ENCODE measurements at regions of chr19 and their contacts with region 1.

Region 1: GRCh38 chr19:49097455-49098288 is 12.4 kb downstream of the SNRNP70 start:
- DNase-seq: peak; percentile 61
- ATAC-seq: peak; percentile 96
- H3K4me3 Mint-ChIP-seq: no peak overlapping the region
- H3K27ac Mint-ChIP-seq: no peak overlapping the region
- H3K4me1 Mint-ChIP-seq: peaks cover 7% of the 10 kb centered on the region
- H3K27me3 Mint-ChIP-seq: no peaks in the 10 kb centered on the region
- CTCF ChIP-seq: peak; percentile 71

Region 2: DNA sequence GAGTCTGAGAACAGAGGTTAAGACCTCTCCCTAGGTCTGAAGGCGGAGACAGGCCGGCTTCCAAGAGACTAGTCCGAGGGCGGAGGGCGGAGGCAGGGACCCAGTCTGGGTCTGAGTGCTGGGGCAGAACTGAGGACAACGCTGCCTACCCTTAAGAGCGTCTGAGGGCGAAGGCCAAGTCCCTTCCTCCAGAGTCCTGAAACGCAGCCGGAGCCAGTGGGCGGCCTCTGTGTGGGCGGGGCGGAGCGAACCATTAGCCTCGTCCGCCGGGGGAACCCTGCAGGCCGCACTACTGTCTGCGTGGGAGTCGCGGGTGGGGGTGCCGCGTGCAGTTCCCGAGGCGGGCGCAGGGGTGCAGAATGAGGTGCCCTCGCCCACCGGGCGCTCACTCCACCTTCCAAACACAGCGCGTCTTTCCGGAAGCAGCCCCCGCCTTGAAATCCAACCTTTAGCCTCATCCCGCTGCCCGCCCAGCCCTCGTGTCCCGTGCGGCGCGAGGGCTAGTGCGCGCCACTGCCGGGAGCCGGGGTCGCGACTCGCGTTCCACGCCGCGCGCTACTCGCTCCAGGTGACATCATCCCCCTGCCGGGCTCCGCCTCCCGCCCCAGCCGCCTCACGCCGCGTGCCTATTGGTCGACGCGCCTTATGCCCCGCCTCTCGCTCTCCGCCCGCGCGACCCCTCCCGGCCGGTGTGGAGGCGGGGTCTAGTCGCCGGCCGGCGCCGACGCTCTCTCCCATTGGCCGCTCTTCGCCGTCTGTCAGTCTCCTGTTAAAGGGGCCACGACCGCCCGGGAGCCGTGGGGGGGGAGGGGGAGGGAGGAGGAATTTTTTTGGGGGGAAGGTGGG is 21.1 kb after region 1 on chr19 and contains the start of gene C19orf73:
- CTCF ChIA-PET with region 1: interaction called, 21 read pairs
- POLR2A ChIA-PET with region 1: interaction called, 5 read pairs
- intact Hi-C with region 1: no loop called
- DNase-seq: peak; percentile 96
- ATAC-seq: peak; percentile 82
- H3K4me3 Mint-ChIP-seq: peak within 1 kb of the TSS; percentile 84
- H3K27ac Mint-ChIP-seq: peak within 1 kb of the TSS; percentile 87
- H3K4me1 Mint-ChIP-seq: peaks cover 44% of the 10 kb centered on the region
- H3K27me3 Mint-ChIP-seq: peaks cover 7% of the 10 kb centered on the region
- CTCF ChIP-seq: no peak
- total RNA-seq, gene C19orf73: 0.98 and 1.0 TPM in 2 replicates

Region 3: GRCh38 chr19:49200238-49200862 is 102.7 kb after region 1 on chr19:
- CTCF ChIA-PET with region 1: interaction called, 54 read pairs
- POLR2A ChIA-PET with region 1: interaction called, 9 read pairs
- intact Hi-C with region 1: loop called (anchors 1 kb)
- DNase-seq: no peak
- ATAC-seq: no peak
- H3K4me3 Mint-ChIP-seq: no peak overlapping the region
- H3K27ac Mint-ChIP-seq: no peak overlapping the region
- H3K4me1 Mint-ChIP-seq: peaks cover 7% of the 10 kb centered on the region
- H3K27me3 Mint-ChIP-seq: peaks cover 2% of the 10 kb centered on the region
- CTCF ChIP-seq: no peak

Region 4: GRCh38 chr19:49224856-49225255 is 127.2 kb after region 1 on chr19:
- CTCF ChIA-PET with region 1: interaction called, 8 read pairs
- POLR2A ChIA-PET with region 1: no interaction called
- intact Hi-C with region 1: loop called (anchors 1 kb)
- DNase-seq: no peak
- ATAC-seq: peak; percentile 54
- H3K4me3 Mint-ChIP-seq: no peak overlapping the region
- H3K27ac Mint-ChIP-seq: no peak overlapping the region
- H3K4me1 Mint-ChIP-seq: peaks cover 6% of the 10 kb centered on the region
- H3K27me3 Mint-ChIP-seq: peaks cover 6% of the 10 kb centered on the region
- CTCF ChIP-seq: no peak

Measured in activated B cell treated with CpG ODN at 0.5 μM for 24 hours (primary cell).